CD8-positive, alpha-beta T cell (primary cell): ENCODE measurements at regions of chr3 and their contacts with region 1.

Region 1: GRCh38 chr3:189148081-189148507 is 23.7 kb upstream of the TPRG1 start:
- DNase-seq: peak; percentile 44 to 82 (median 71)
- ATAC-seq: peak; percentile 74
- H3K4me3 ChIP-seq: no peak overlapping the region
- H3K4me3 Mint-ChIP-seq: no peak overlapping the region
- H3K27ac ChIP-seq: no peak overlapping the region
- H3K27ac Mint-ChIP-seq: no peak overlapping the region
- H3K4me1 ChIP-seq: peaks cover 14% of the 10 kb centered on the region
- H3K4me1 Mint-ChIP-seq: peaks cover 17% of the 10 kb centered on the region
- H3K27me3 ChIP-seq: no peaks in the 10 kb centered on the region
- H3K27me3 Mint-ChIP-seq: no peaks in the 10 kb centered on the region
- CTCF ChIP-seq: peak; percentile 74

Region 2: DNA sequence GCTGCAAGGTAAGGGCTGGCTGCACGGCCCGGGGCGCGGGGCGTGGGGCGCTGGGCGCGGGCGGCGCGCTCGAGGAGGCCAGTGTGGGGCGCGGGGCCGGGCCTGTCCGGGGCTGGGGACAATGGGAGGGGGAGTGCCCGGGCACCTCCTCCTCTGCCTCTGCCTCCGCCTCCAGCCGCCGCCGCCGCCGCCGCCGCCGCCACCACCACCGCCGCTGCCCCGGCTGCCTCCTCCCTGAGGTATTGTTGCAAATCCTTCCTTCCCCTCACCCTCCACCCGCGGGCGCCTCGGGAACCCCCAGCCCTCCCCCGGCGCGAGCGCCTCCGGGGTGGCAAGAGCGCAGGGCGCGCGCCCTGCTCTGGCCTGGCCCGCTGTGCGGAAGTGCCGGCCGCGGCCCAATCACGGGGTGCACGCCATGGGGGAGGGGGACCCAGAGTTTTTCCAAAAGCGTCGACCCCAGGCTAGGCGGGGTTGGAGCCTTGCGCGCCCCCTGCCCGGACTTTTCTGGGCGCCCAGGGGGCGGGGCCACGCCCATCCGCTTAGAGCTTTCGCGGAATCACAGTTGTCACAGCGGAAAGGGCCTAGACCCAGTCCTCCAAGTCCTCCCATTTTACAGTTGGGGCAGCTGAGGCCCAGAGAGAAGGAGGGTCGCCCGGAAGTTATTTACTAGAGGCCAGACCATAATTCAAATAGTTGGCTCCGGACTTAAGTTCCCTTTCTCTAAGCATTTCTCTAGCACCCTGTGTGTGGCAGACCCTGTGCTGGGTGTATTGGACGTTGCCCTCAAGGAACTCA is 993.9 kb before region 1 on chr3 and contains the start of gene LPP:
- CTCF ChIA-PET with region 1: no interaction called
- POLR2A ChIA-PET with region 1: no interaction called
- intact Hi-C with region 1: loop called (anchors 10 kb)
- DNase-seq: peak; percentile 60 to 93 (median 79)
- ATAC-seq: peak; percentile 84
- H3K4me3 ChIP-seq: peak within 1 kb of the TSS; percentile 72 to 81
- H3K4me3 Mint-ChIP-seq: peak within 1 kb of the TSS; percentile 88
- H3K27ac ChIP-seq: peak within 1 kb of the TSS; percentile 64 to 79
- H3K27ac Mint-ChIP-seq: peak within 1 kb of the TSS; percentile 90
- H3K4me1 ChIP-seq: peaks cover 27% of the 10 kb centered on the region
- H3K4me1 Mint-ChIP-seq: peaks cover 52% of the 10 kb centered on the region
- H3K27me3 ChIP-seq: no peaks in the 10 kb centered on the region
- H3K27me3 Mint-ChIP-seq: no peaks in the 10 kb centered on the region
- CTCF ChIP-seq: no peak
- total RNA-seq, gene LPP: 35.2 to 37.0 TPM

Region 3: DNA sequence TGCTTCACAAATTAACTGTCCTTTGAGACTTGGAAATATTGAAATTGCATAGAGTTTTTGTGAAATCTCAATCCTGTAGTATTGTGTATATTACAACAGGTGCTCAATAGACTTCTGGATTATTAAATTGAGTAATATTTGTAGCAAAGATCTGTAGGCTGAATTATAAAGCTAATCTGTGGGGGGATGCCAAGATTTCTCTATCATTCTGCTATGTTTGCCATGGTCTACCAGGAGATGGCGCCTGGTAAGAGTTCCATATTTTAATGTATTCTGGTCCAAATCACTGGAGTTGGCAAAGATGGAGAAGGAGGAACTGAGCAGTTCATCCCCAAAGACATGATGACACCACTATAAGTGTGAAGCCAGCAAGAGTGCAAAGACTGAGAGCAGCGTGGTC is 317.2 kb before region 1 on chr3:
- CTCF ChIA-PET with region 1: interaction called, 3 read pairs
- POLR2A ChIA-PET with region 1: no interaction called
- intact Hi-C with region 1: loop called in 1 of 2 experiments (anchors 2 kb)
- DNase-seq: peak in 1 of 9 experiments; percentile 9
- ATAC-seq: no peak
- H3K4me3 ChIP-seq: no peak overlapping the region
- H3K4me3 Mint-ChIP-seq: no peak overlapping the region
- H3K27ac ChIP-seq: no peak overlapping the region
- H3K27ac Mint-ChIP-seq: no peak overlapping the region
- H3K4me1 ChIP-seq: peaks cover 8% of the 10 kb centered on the region
- H3K4me1 Mint-ChIP-seq: peaks cover 14% of the 10 kb centered on the region
- H3K27me3 ChIP-seq: no peaks in the 10 kb centered on the region
- H3K27me3 Mint-ChIP-seq: no peaks in the 10 kb centered on the region
- CTCF ChIP-seq: no peak

Region 4: GRCh38 chr3:189041482-189042090 is 106.5 kb before region 1 on chr3:
- CTCF ChIA-PET with region 1: interaction called, 11 read pairs
- POLR2A ChIA-PET with region 1: interaction called, 6 read pairs
- intact Hi-C with region 1: loop called (anchors 1 to 2 kb)
- DNase-seq: peak; percentile 43 to 90 (median 69)
- ATAC-seq: peak; percentile 98
- H3K4me3 ChIP-seq: no peak overlapping the region
- H3K4me3 Mint-ChIP-seq: no peak overlapping the region
- H3K27ac ChIP-seq: peak overlapping the region in 1 of 2 experiments; percentile 44
- H3K27ac Mint-ChIP-seq: peak overlapping the region; percentile 72
- H3K4me1 ChIP-seq: peaks cover 3% of the 10 kb centered on the region
- H3K4me1 Mint-ChIP-seq: peaks cover 8% of the 10 kb centered on the region
- H3K27me3 ChIP-seq: no peaks in the 10 kb centered on the region
- H3K27me3 Mint-ChIP-seq: no peaks in the 10 kb centered on the region
- CTCF ChIP-seq: peak; percentile 65

Region 5: GRCh38 chr3:189132231-189132707 is 15.8 kb before region 1 on chr3:
- CTCF ChIA-PET with region 1: interaction called, 23 read pairs
- POLR2A ChIA-PET with region 1: interaction called, 3 read pairs
- intact Hi-C with region 1: loop called in 1 of 2 experiments (anchors 1 kb)
- DNase-seq: peak; percentile 51 to 93 (median 78)
- ATAC-seq: peak; percentile 92
- H3K4me3 ChIP-seq: peak overlapping the region in 1 of 2 experiments; percentile 4
- H3K4me3 Mint-ChIP-seq: peak overlapping the region; percentile 71
- H3K27ac ChIP-seq: peak overlapping the region; percentile 47 to 86
- H3K27ac Mint-ChIP-seq: peak overlapping the region; percentile 97
- H3K4me1 ChIP-seq: peaks cover 24% of the 10 kb centered on the region
- H3K4me1 Mint-ChIP-seq: peaks cover 30% of the 10 kb centered on the region
- H3K27me3 ChIP-seq: no peaks in the 10 kb centered on the region
- H3K27me3 Mint-ChIP-seq: no peaks in the 10 kb centered on the region
- CTCF ChIP-seq: no peak

Region 6: DNA sequence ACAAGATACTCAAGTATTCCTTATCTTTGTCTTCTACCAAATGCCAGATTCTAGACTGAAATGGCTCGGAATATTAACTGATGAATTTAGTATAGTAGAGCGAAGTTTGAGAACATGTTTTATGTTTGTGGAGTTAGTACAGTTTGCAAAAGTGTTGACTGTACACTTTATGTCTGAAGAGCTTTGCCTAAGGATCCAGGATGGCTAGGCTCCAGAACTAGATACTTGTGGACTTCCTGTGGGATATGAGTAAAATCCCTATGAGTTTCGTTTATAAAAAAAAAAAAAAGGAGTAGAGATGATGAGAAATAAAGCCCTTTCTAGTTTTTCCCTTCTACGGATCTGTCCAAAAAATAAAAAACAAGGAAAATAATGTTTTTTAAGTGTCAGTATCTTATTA is 579.8 kb after region 1 on chr3:
- CTCF ChIA-PET with region 1: no interaction called
- POLR2A ChIA-PET with region 1: no interaction called
- intact Hi-C with region 1: no loop called
- DNase-seq: no peak
- ATAC-seq: no peak
- H3K4me3 ChIP-seq: no peak overlapping the region
- H3K4me3 Mint-ChIP-seq: no peak overlapping the region
- H3K27ac ChIP-seq: no peak overlapping the region
- H3K27ac Mint-ChIP-seq: no peak overlapping the region
- H3K4me1 ChIP-seq: no peaks in the 10 kb centered on the region
- H3K4me1 Mint-ChIP-seq: no peaks in the 10 kb centered on the region
- H3K27me3 ChIP-seq: no peaks in the 10 kb centered on the region
- H3K27me3 Mint-ChIP-seq: no peaks in the 10 kb centered on the region
- CTCF ChIP-seq: no peak

Region 7: GRCh38 chr3:189842695-189843541 is 694.8 kb after region 1 on chr3:
- CTCF ChIA-PET with region 1: no interaction called
- POLR2A ChIA-PET with region 1: no interaction called
- intact Hi-C with region 1: no loop called
- DNase-seq: no peak
- ATAC-seq: no peak
- H3K4me3 ChIP-seq: no peak overlapping the region
- H3K4me3 Mint-ChIP-seq: no peak overlapping the region
- H3K27ac ChIP-seq: no peak overlapping the region
- H3K27ac Mint-ChIP-seq: no peak overlapping the region
- H3K4me1 ChIP-seq: no peaks in the 10 kb centered on the region
- H3K4me1 Mint-ChIP-seq: no peaks in the 10 kb centered on the region
- H3K27me3 ChIP-seq: no peaks in the 10 kb centered on the region
- H3K27me3 Mint-ChIP-seq: no peaks in the 10 kb centered on the region
- CTCF ChIP-seq: no peak